GM18951 (cell line): ENCODE measurements at regions of chr17 and their contacts with region 1.

Region 1: DNA sequence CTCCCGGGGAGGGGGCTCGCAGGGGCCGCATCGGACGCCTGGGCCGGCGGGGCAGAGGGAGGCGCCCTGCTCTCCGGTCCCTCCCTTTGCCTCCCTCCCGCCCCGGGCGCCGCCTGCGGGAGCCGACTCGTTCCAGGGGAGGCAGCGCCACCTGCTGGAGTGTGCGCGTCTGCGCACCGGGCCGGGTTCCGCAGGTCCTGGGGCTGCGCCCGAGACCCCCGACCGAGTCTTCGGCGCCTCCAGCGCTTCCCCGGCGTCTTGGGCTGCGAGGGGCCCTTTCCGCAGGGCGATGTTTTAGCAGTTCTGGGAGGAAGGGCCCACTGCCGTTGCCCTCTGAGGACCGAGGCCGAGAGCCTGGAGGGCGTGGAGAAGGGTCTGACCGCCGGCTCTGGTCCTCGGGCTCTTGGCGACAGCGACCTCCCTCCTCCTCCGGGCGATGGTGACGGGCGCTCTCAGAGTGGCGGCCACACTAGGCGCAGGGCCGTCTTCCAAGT is 106.3 kb downstream of the SEC14L1 start:
- POLR2A ChIP-seq: no peak

Region 2: GRCh38 chr17:77088455-77089123 is 158.5 kb before region 1 on chr17:
- in situ Hi-C with region 1: loop called (anchors 5 kb)
- POLR2A ChIP-seq: peak; percentile 83

Region 3: DNA sequence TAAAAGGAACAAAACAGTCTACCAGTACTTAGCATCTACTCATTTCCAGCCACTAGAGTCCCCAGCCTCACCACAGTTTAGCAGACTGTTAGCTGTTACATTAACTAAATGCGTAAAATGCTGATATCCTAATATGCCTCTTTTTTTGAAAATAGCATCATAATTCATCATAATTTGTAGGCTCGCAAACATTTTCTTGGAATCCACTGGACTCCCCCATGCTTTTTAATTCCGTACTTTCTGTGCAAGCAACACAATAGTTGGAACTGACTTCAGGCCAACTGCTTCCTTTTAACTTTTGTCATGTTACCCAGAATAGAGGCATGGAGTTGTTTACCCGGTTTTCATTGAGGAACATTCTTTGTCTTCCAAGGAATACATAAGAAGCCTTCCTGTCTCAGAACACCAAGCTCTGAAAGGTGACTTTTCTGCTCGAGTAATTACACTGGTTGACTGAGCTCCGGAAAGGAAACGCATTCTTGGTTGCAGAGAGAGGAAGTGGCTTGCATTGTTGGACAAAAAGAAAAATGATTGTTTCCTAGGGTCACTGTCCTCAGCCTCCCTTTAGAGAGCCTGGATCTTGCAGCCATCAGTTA is 137.2 kb before region 1 on chr17:
- in situ Hi-C with region 1: no loop called
- POLR2A ChIP-seq: no peak